ENCODE measurements at regions of chr14 and their contacts with region 1.

Region 1: DNA sequence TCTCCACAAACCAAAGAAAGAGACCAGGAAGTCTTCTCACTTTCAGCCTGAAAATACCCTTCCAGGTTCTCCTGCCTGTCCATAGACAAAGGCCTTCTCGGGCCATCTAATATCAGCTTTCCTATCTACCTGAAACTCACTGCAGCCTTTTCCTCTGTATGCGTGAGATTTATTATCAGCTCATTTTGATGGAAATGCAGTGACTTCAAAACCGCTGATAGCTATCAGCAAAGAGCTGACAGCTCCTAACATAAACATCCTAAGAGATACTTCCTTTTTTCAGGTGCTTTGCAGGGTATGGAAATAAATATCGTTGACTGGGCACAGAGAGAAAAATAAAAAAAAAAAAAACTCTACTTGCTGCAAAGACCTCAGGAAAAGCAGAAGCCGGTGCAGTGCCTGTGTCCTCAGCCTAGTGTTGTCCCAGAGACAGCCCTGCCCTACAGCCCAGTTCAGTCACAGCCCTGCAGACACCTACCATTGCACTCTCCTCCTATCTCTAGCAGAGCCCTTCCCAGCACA is 215.0 kb upstream of the EGLN3 start:
- DNase-seq: no peak
- H3K4me3 ChIP-seq: no peak overlapping the region
- H3K27ac ChIP-seq: no peak overlapping the region
- H3K4me1 ChIP-seq: no peaks in the 10 kb centered on the region
- H3K27me3 ChIP-seq: peaks cover 4% of the 10 kb centered on the region
- CTCF ChIP-seq: no peak

Region 2: DNA sequence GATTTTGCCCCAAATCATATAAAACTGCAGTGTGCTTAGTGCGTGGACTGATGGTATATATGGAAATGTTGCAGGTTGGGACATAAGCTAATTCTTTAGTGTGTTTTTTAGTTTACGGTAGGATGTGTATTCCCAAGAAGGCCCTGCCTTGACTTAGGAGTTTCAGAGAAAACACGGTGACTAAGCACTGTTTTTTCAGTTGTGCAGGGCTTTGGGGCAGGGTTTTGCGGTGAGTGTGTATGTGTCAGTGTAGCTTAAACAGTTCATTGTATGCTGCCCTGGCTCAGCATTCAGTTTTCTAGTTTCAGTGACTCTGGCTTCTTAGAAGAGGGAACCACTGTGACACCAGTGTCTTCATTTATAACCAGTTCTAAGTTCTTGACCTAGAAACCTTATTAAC is 1735.6 kb before region 1 on chr14:
- CTCF ChIA-PET with region 1: no interaction called
- POLR2A ChIA-PET with region 1: interaction called, 11 read pairs
- intact Hi-C with region 1: no loop called
- DNase-seq: no peak
- H3K4me3 ChIP-seq: no peak overlapping the region
- H3K27ac ChIP-seq: no peak overlapping the region
- H3K4me1 ChIP-seq: no peaks in the 10 kb centered on the region
- H3K27me3 ChIP-seq: no peaks in the 10 kb centered on the region
- CTCF ChIP-seq: no peak

Region 3: DNA sequence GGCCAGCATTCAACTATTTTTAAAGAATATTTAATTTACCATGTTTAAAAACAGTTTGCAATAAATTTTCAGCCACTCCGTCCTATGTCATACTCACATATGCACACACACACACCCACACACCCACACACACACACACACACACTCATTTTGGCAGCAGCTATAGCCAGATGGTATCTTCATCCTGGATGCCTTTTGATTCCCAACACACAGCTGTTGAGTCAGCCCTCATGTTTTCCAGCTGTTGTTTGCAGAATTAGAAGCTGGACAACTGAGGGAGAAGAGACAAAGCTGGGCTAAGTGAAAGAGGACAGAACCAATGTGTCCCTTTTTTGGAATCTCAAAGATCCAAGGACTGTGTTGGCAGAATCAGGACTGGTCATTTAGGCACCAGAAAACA is 135.0 kb before region 1 on chr14:
- CTCF ChIA-PET with region 1: no interaction called
- POLR2A ChIA-PET with region 1: no interaction called
- intact Hi-C with region 1: no loop called
- DNase-seq: no peak
- H3K4me3 ChIP-seq: no peak overlapping the region
- H3K27ac ChIP-seq: no peak overlapping the region
- H3K4me1 ChIP-seq: no peaks in the 10 kb centered on the region
- H3K27me3 ChIP-seq: no peaks in the 10 kb centered on the region
- CTCF ChIP-seq: no peak

Region 4: GRCh38 chr14:34203251-34203775 is 37.4 kb after region 1 on chr14:
- CTCF ChIA-PET with region 1: no interaction called
- POLR2A ChIA-PET with region 1: no interaction called
- intact Hi-C with region 1: loop called (anchors 5 kb)
- DNase-seq: no peak
- H3K4me3 ChIP-seq: no peak overlapping the region
- H3K27ac ChIP-seq: no peak overlapping the region
- H3K4me1 ChIP-seq: no peaks in the 10 kb centered on the region
- H3K27me3 ChIP-seq: peaks cover 3% of the 10 kb centered on the region
- CTCF ChIP-seq: no peak

Region 5: GRCh38 chr14:34331728-34332623 is 166.1 kb after region 1 on chr14:
- CTCF ChIA-PET with region 1: no interaction called
- POLR2A ChIA-PET with region 1: no interaction called
- intact Hi-C with region 1: no loop called
- DNase-seq: peak; percentile 63
- H3K4me3 ChIP-seq: no peak overlapping the region
- H3K27ac ChIP-seq: no peak overlapping the region
- H3K4me1 ChIP-seq: no peaks in the 10 kb centered on the region
- H3K27me3 ChIP-seq: no peaks in the 10 kb centered on the region
- CTCF ChIP-seq: peak; percentile 90